Activated CD8-positive, alpha-beta T cell treated with anti-CD3 and anti-CD28 coated beads for 36 hours (primary cell): ENCODE measurements at regions of chr1 and their contacts with region 1.

Region 1: DNA sequence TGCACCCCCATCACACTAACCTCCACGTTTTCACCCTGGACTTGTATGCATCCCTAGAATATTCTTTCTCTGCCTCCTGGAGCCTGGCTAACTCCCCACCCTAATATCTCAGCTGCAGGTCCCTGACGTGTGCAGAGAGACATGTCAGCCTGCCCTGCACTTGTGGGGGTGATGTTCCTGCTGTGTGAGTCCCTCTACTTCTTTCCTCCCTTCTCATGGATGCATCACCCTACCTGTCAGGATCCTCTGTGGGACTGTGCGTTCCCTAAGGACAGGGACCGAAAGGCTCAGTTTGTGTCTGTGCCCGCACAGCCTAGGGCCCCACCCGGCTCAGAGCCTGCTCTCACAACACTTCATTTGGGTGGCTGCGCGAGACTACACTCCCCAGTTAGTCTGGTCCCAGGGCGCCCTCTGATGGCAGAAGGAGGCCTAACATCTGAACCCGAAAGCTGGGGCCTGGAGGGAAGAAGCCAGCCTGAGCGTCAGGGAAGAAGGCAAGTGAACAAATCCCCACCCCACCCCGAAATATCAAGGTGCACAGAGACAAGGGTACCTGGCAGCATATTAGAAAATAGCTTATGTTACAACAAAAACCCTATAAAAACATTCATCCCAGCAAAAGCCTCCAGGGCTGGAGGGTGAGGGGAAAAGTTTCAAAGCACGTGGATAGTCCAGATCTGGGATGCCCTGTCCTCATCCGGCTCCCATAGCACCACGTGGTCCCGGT is 3.7 kb downstream of the CD52 start:
- DNase-seq: peak; percentile 98
- ATAC-seq: peak; percentile 62
- H3K4me3 Mint-ChIP-seq: peak overlapping the region; percentile 93
- H3K27ac Mint-ChIP-seq: peak overlapping the region; percentile 94
- H3K4me1 Mint-ChIP-seq: peaks cover 49% of the 10 kb centered on the region
- H3K27me3 Mint-ChIP-seq: no peaks in the 10 kb centered on the region
- CTCF ChIP-seq: peak; percentile 94

Region 2: GRCh38 chr1:25837262-25837875 is 484.1 kb before region 1 on chr1:
- CTCF ChIA-PET with region 1: no interaction called
- POLR2A ChIA-PET with region 1: no interaction called
- intact Hi-C with region 1: no loop called
- DNase-seq: no peak
- ATAC-seq: no peak
- H3K4me3 Mint-ChIP-seq: no peak overlapping the region
- H3K27ac Mint-ChIP-seq: no peak overlapping the region
- H3K4me1 Mint-ChIP-seq: peaks cover under 1% of the 10 kb centered on the region
- H3K27me3 Mint-ChIP-seq: no peaks in the 10 kb centered on the region
- CTCF ChIP-seq: peak; percentile 46

Region 3: GRCh38 chr1:25933479-25934365 is 387.8 kb before region 1 on chr1:
- CTCF ChIA-PET with region 1: no interaction called
- POLR2A ChIA-PET with region 1: no interaction called
- intact Hi-C with region 1: no loop called
- DNase-seq: no peak
- ATAC-seq: no peak
- H3K4me3 Mint-ChIP-seq: no peak overlapping the region
- H3K27ac Mint-ChIP-seq: no peak overlapping the region
- H3K4me1 Mint-ChIP-seq: peaks cover 3% of the 10 kb centered on the region
- H3K27me3 Mint-ChIP-seq: no peaks in the 10 kb centered on the region
- CTCF ChIP-seq: no peak

Region 4: GRCh38 chr1:26169669-26170471 is 151.6 kb before region 1 on chr1 and contains the start of gene ZNF593:
- CTCF ChIA-PET with region 1: interaction called, 18 read pairs
- POLR2A ChIA-PET with region 1: interaction called, 3 read pairs
- intact Hi-C with region 1: no loop called
- DNase-seq: peak; percentile 92
- ATAC-seq: peak; percentile 97
- H3K4me3 Mint-ChIP-seq: peak within 1 kb of the TSS; percentile 91
- H3K27ac Mint-ChIP-seq: peak within 1 kb of the TSS; percentile 90
- H3K4me1 Mint-ChIP-seq: peaks cover 11% of the 10 kb centered on the region
- H3K27me3 Mint-ChIP-seq: peaks cover under 1% of the 10 kb centered on the region
- CTCF ChIP-seq: peak; percentile 84
- total RNA-seq, gene ZNF593: 40.9 to 41.1 TPM

Region 5: GRCh38 chr1:26225033-26225831 is 96.2 kb before region 1 on chr1:
- CTCF ChIA-PET with region 1: no interaction called
- POLR2A ChIA-PET with region 1: no interaction called
- intact Hi-C with region 1: no loop called
- DNase-seq: peak; percentile 68
- ATAC-seq: peak; percentile 89
- H3K4me3 Mint-ChIP-seq: peak overlapping the region; percentile 59
- H3K27ac Mint-ChIP-seq: no peak overlapping the region
- H3K4me1 Mint-ChIP-seq: peaks cover 5% of the 10 kb centered on the region
- H3K27me3 Mint-ChIP-seq: peaks cover 21% of the 10 kb centered on the region
- CTCF ChIP-seq: no peak

Region 6: GRCh38 chr1:26265405-26265804 is 56.1 kb before region 1 on chr1:
- CTCF ChIA-PET with region 1: interaction called, 12 read pairs
- POLR2A ChIA-PET with region 1: interaction called, 3 read pairs
- intact Hi-C with region 1: no loop called
- DNase-seq: no peak
- ATAC-seq: peak; percentile 39
- H3K4me3 Mint-ChIP-seq: no peak overlapping the region
- H3K27ac Mint-ChIP-seq: peak overlapping the region; percentile 3
- H3K4me1 Mint-ChIP-seq: peaks cover 7% of the 10 kb centered on the region
- H3K27me3 Mint-ChIP-seq: no peaks in the 10 kb centered on the region
- CTCF ChIP-seq: no peak

Region 7: DNA sequence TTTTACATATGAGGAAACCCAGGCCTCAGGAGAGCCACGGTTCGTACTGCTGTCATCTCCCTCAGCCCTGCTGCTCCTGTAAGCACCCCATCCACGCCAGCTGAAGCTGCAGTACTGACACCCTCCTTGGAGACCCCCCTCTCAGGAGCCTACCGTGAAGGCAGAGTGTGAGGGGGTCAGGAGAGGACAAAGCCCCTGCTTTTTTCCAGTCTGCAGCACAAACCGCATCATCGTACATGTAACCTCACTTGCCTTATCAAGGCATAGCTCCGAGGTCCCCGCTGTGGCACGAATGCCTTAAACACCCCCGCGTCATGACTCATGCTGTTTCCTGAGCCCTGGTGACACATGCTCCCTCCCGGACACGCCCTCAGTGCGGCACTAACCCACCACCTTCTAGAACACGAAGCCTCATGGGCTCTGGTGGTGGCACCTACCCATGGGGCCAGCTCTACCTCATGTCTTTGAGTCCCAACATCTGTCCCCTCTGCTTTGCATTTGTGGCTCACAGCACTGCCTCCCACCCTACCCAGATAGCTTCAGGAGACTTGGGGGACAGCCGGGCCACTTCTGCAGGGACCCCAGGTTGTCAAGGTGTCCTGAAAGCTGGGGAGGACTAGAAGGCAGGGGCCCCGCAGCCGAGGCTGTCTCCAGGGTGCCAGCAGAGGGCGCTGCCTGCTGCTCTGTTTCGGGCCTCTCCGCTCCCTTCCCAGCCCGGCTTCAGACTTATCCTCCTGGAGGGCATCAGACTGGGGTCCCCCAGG is 36.7 kb before region 1 on chr1:
- CTCF ChIA-PET with region 1: interaction called, 282 read pairs
- POLR2A ChIA-PET with region 1: interaction called, 284 read pairs
- intact Hi-C with region 1: loop called (anchors 2 kb)
- DNase-seq: peak; percentile 100
- ATAC-seq: peak; percentile 61
- H3K4me3 Mint-ChIP-seq: peak overlapping the region; percentile 88
- H3K27ac Mint-ChIP-seq: peak overlapping the region; percentile 99
- H3K4me1 Mint-ChIP-seq: peaks cover 85% of the 10 kb centered on the region
- H3K27me3 Mint-ChIP-seq: no peaks in the 10 kb centered on the region
- CTCF ChIP-seq: peak; percentile 72

Region 8: DNA sequence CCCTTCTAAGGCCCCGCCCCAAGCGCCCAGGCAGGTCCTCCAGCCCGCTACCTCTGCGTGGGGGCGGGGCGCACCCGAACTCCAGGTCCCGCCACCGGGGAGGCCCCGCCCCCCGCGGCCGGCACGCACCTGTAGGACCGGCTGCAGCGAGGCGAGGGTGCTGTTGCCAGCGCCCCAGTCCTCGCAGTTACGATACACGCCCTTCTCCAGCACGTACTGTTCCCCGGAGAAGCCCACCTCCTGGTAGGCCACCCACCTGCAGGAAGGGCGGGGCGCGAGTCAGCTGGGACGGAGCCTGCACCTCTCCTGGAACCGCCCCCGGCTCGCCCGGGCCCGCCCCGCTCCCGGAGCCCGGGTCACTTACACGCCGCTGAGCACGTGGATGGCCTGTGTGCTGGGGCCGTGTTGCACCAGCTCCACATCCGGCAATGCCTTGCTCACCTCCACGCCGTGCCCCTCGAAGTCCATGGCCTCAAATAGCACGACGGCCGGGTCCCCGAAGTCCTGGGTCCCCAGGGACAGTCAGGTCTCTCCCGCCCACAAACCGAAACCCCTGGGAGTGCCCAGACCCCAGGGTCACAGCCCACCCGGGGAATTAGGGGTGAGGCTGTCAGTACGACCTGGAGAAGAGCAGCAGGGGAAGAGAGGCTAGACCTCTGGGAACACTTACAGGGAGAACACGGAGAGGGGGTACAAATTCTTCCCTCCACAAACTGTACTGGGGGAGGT is 15.2 kb after region 1 on chr1:
- CTCF ChIA-PET with region 1: interaction called, 13 read pairs
- POLR2A ChIA-PET with region 1: interaction called, 3 read pairs
- intact Hi-C with region 1: no loop called
- DNase-seq: peak; percentile 89
- ATAC-seq: peak; percentile 96
- H3K4me3 Mint-ChIP-seq: peak overlapping the region; percentile 87
- H3K27ac Mint-ChIP-seq: no peak overlapping the region
- H3K4me1 Mint-ChIP-seq: peaks cover 11% of the 10 kb centered on the region
- H3K27me3 Mint-ChIP-seq: no peaks in the 10 kb centered on the region
- CTCF ChIP-seq: no peak

Region 9: GRCh38 chr1:26363549-26364448 is 42.3 kb after region 1 on chr1:
- CTCF ChIA-PET with region 1: interaction called, 16 read pairs
- POLR2A ChIA-PET with region 1: interaction called, 5 read pairs
- intact Hi-C with region 1: no loop called
- DNase-seq: peak; percentile 94
- ATAC-seq: peak; percentile 70
- H3K4me3 Mint-ChIP-seq: no peak overlapping the region
- H3K27ac Mint-ChIP-seq: no peak overlapping the region
- H3K4me1 Mint-ChIP-seq: peaks cover 43% of the 10 kb centered on the region
- H3K27me3 Mint-ChIP-seq: peaks cover 17% of the 10 kb centered on the region
- CTCF ChIP-seq: peak; percentile 98

Region 10: GRCh38 chr1:26378088-26378878 is 56.8 kb after region 1 on chr1:
- CTCF ChIA-PET with region 1: interaction called, 11 read pairs
- POLR2A ChIA-PET with region 1: interaction called, 3 read pairs
- intact Hi-C with region 1: loop called (anchors 5 kb)
- DNase-seq: peak; percentile 91
- ATAC-seq: peak; percentile 96
- H3K4me3 Mint-ChIP-seq: peak overlapping the region; percentile 33
- H3K27ac Mint-ChIP-seq: peak overlapping the region; percentile 82
- H3K4me1 Mint-ChIP-seq: peaks cover 59% of the 10 kb centered on the region
- H3K27me3 Mint-ChIP-seq: no peaks in the 10 kb centered on the region
- CTCF ChIP-seq: no peak